Common myeloid progenitor, CD34-positive (primary cell): ENCODE measurements at regions of chr1 and their contacts with region 1.

Region 1: GRCh38 chr1:110524311-110525251 is 5.6 kb upstream of the KCNA10 start:
- DNase-seq: peak; percentile 70 to 82 (median 79)
- H3K4me3 ChIP-seq: peak overlapping the region in 1 of 7 experiments; percentile 3
- H3K27ac ChIP-seq: no peak overlapping the region
- H3K4me1 ChIP-seq: peaks cover 0 to 6% (median 2%) of the 10 kb centered on the region in 4 experiments
- H3K27me3 ChIP-seq: peaks cover 0 to 30% (median 14%) of the 10 kb centered on the region in 5 experiments

Region 2: GRCh38 chr1:110542725-110543124 is 18.1 kb after region 1 on chr1:
- CTCF ChIA-PET with region 1: interaction called, 21 read pairs
- POLR2A ChIA-PET with region 1: no interaction called
- DNase-seq: peak; percentile 36 to 72 (median 68)
- H3K4me3 ChIP-seq: no peak overlapping the region
- H3K27ac ChIP-seq: no peak overlapping the region
- H3K4me1 ChIP-seq: no peaks in the 10 kb centered on the region
- H3K27me3 ChIP-seq: peaks cover 0 to 7% (median 0%) of the 10 kb centered on the region in 5 experiments